ENCODE measurements at regions of chr2 and their contacts with region 1.

Region 1: DNA sequence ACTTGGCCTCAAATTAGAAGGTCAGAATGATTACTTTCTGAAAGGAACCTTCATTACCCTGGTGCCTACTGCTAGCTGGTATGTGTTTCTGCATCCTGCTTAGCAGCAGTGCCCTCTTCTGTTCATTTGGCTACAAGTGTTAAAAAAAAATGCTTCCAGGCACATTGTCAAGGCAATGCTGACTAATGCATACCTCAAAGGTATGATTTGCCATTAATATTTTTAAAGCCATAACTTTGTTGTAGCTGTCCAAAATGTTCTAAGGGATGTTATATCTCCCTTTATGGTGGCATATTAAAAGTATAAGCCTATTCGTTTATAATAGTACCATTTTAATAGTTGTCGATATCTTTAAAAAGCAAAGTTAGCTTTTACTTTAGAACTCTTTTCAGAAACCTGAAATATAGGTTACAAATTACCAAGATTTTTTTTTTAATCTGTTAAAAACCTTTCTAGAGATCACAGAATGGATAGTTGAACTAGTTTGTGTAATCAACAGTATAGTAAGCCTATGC is 52.0 kb upstream of the FAM171B start:
- DNase-seq: no peak

Region 2: GRCh38 chr2:186503848-186504606 is 137.8 kb before region 1 on chr2:
- intact Hi-C with region 1: loop called (anchors 5 kb)
- DNase-seq: no peak

Region 3: GRCh38 chr2:186687807-186688211 is 45.9 kb after region 1 on chr2:
- intact Hi-C with region 1: no loop called
- DNase-seq: no peak